Mammary epithelial cell (primary cell): ENCODE measurements at regions of chr7 and their contacts with region 1.

Region 1: DNA sequence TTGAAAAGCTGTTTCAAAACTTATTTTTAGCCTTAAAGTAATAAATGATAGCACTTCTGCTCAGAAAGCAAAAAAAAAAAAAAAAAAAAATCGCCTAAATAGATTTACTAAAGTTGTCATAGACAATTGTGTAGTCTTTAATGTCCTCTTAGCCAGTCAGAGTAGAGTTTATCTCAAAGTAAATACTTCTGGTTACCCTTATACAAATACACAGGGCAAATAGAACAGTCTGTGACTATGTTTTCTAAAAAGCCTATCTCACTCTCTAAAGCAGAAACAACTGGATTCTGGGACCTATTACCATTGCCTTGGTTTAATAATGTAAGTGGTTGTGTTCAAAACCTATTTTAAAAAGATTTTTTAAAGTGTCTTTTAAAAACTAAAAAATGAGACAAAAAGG is 156.2 kb upstream of the THSD7A start:
- DNase-seq: no peak
- H3K4me3 ChIP-seq: no peak overlapping the region
- H3K27ac ChIP-seq: no peak overlapping the region
- H3K4me1 ChIP-seq: no peaks in the 10 kb centered on the region
- H3K27me3 ChIP-seq: no peaks in the 10 kb centered on the region
- CTCF ChIP-seq: no peak

Region 2: GRCh38 chr7:11956991-11957390 is 31.2 kb before region 1 on chr7:
- CTCF ChIA-PET with region 1: no interaction called
- dilution Hi-C with region 1: loop called (anchors 5 kb)
- in situ Hi-C with region 1: no loop called
- intact Hi-C with region 1: no loop called
- DNase-seq: no peak
- H3K4me3 ChIP-seq: no peak overlapping the region
- H3K27ac ChIP-seq: no peak overlapping the region
- H3K4me1 ChIP-seq: no peaks in the 10 kb centered on the region
- H3K27me3 ChIP-seq: no peaks in the 10 kb centered on the region
- CTCF ChIP-seq: no peak

Region 3: GRCh38 chr7:12017046-12017445 is 28.9 kb after region 1 on chr7:
- CTCF ChIA-PET with region 1: no interaction called
- dilution Hi-C with region 1: no loop called
- in situ Hi-C with region 1: no loop called
- intact Hi-C with region 1: no loop called
- DNase-seq: no peak
- H3K4me3 ChIP-seq: no peak overlapping the region
- H3K27ac ChIP-seq: no peak overlapping the region
- H3K4me1 ChIP-seq: no peaks in the 10 kb centered on the region
- H3K27me3 ChIP-seq: no peaks in the 10 kb centered on the region
- CTCF ChIP-seq: no peak

Region 4: GRCh38 chr7:13702251-13702650 is 1714.1 kb after region 1 on chr7:
- CTCF ChIA-PET with region 1: no interaction called
- dilution Hi-C with region 1: no loop called
- in situ Hi-C with region 1: no loop called
- intact Hi-C with region 1: no loop called
- DNase-seq: no peak
- H3K4me3 ChIP-seq: no peak overlapping the region
- H3K27ac ChIP-seq: no peak overlapping the region
- H3K4me1 ChIP-seq: no peaks in the 10 kb centered on the region
- H3K27me3 ChIP-seq: no peaks in the 10 kb centered on the region
- CTCF ChIP-seq: no peak